Ovary (tissue), 10 donors: ENCODE measurements at regions of chr3 and their contacts with region 1.

Region 1: GRCh38 chr3:107740992-107741896 is 218.5 kb downstream of the BBX start:
- DNase-seq: no peak
- H3K4me3 ChIP-seq: no peak overlapping the region
- H3K27ac ChIP-seq: no peak overlapping the region
- H3K4me1 ChIP-seq: peaks cover 2% of the 10 kb centered on the region
- H3K27me3 ChIP-seq: no peaks in the 10 kb centered on the region
- CTCF ChIP-seq: peak; percentile 21 to 44 (median 38)
- EP300 ChIP-seq: no peak
- POLR2A ChIP-seq: no peak

Region 2: DNA sequence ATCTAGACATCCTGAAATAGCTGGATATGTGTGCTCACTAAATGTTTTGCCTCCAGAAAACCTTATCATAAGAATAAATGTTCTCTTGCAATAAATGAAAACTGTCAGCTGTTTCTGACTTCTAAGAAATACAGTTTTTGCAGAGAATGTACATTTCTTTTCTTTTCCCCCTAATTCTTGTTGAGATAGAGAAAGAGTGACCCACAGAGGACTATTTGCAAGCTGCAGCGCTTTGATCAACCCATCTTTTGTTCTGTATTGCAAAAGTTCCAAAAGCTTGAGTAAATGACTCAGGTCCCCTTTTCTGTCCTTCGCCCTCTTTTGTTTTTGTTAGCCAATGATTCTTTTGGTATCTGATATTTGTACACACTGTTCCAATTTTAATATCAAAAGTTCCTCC is 76.6 kb before region 1 on chr3:
- intact Hi-C with region 1: loop called in 1 of 4 experiments (anchors 5 kb)
- DNase-seq: no peak
- H3K4me3 ChIP-seq: no peak overlapping the region
- H3K27ac ChIP-seq: no peak overlapping the region
- H3K4me1 ChIP-seq: peaks cover 7% of the 10 kb centered on the region
- H3K27me3 ChIP-seq: no peaks in the 10 kb centered on the region
- CTCF ChIP-seq: no peak
- EP300 ChIP-seq: no peak
- POLR2A ChIP-seq: no peak

Region 3: DNA sequence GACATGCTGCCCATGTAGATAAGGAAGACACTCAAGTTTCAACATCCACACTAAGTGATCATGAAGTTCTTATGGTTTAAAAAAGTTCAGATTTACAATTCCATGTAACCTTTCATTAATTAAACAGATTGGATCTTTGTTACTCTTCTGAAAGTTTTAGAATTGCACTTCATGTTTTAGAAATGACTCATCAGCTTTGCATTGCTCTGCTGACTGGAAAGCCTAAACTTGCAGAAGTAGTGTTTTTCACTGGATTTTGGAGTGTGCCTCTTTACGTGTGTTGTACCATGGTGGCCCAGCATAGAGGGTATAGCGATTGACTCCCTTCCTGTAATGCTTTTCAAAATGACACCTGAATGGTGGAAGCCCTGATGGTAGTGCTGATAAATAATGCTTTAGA is 60.5 kb before region 1 on chr3:
- intact Hi-C with region 1: loop called in 2 of 4 experiments (anchors 10 kb)
- DNase-seq: no peak
- H3K4me3 ChIP-seq: no peak overlapping the region
- H3K27ac ChIP-seq: no peak overlapping the region
- H3K4me1 ChIP-seq: no peaks in the 10 kb centered on the region
- H3K27me3 ChIP-seq: no peaks in the 10 kb centered on the region
- CTCF ChIP-seq: no peak
- EP300 ChIP-seq: no peak
- POLR2A ChIP-seq: no peak